Right ventricle myocardium inferior (tissue), 1 donor: ENCODE measurements at regions of chr4 and their contacts with region 1.

Region 1: DNA sequence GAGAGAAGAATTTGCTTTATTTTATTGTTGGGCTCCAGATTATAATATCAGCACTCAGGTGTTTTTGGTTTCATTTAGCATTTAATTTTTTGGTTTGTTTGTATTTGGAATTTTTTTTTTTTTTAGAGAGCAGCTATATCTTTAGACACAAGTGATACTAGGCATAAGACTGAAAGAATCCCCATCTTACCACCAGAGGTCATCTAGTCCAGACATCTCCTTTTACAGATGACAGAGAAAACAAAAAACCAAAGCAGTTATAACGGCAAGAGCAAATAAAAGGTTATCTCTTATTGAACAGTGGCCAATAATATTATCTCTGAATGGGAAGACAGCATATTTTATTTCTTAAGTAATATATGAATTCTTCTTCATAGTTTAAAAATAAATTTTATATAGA is 22.8 kb downstream of the USP38 start:
- DNase-seq: no peak
- ATAC-seq: peak; percentile 60

Region 2: GRCh38 chr4:142886546-142886945 is 321.0 kb before region 1 on chr4:
- intact Hi-C with region 1: no loop called
- DNase-seq: no peak
- ATAC-seq: no peak

Region 3: GRCh38 chr4:143025081-143025704 is 182.4 kb before region 1 on chr4:
- intact Hi-C with region 1: no loop called
- DNase-seq: no peak
- ATAC-seq: no peak

Region 4: GRCh38 chr4:143482840-143483239 is 275.3 kb after region 1 on chr4:
- intact Hi-C with region 1: loop called (anchors 2 kb)
- DNase-seq: no peak
- ATAC-seq: peak; percentile 42

Region 5: GRCh38 chr4:145168581-145169187 is 1961.1 kb after region 1 on chr4:
- intact Hi-C with region 1: loop called (anchors 10 kb)
- DNase-seq: no peak
- ATAC-seq: no peak